Activated T-helper 2 cell treated with anti-CD3 and anti-CD28 coated beads, Interferon-gamma antibody, Interleukin-2, Interleukin-4, amounts not matched to agents 10 μg/mL and 5 μg/mL and 100 μg/mL, durations not matched to agents 14 hours and 24 hours and 36 hours (primary cell): ENCODE measurements at regions of chr15 and their contacts with region 1.

Region 1: GRCh38 chr15:82951472-82952157 is 905 bp downstream of the HOMER2 start:
- DNase-seq: no peak
- H3K4me3 Mint-ChIP-seq: no peak overlapping the region
- H3K27ac Mint-ChIP-seq: no peak overlapping the region
- H3K4me1 Mint-ChIP-seq: peaks cover 13% of the 10 kb centered on the region
- H3K27me3 Mint-ChIP-seq: peaks cover 4% of the 10 kb centered on the region

Region 2: GRCh38 chr15:82832601-82833361 is 118.8 kb before region 1 on chr15:
- intact Hi-C with region 1: loop called (anchors 2 kb)
- DNase-seq: peak; percentile 30
- H3K4me3 Mint-ChIP-seq: peak overlapping the region; percentile 49
- H3K27ac Mint-ChIP-seq: peak overlapping the region; percentile 91
- H3K4me1 Mint-ChIP-seq: peaks cover 46% of the 10 kb centered on the region
- H3K27me3 Mint-ChIP-seq: no peaks in the 10 kb centered on the region

Region 3: DNA sequence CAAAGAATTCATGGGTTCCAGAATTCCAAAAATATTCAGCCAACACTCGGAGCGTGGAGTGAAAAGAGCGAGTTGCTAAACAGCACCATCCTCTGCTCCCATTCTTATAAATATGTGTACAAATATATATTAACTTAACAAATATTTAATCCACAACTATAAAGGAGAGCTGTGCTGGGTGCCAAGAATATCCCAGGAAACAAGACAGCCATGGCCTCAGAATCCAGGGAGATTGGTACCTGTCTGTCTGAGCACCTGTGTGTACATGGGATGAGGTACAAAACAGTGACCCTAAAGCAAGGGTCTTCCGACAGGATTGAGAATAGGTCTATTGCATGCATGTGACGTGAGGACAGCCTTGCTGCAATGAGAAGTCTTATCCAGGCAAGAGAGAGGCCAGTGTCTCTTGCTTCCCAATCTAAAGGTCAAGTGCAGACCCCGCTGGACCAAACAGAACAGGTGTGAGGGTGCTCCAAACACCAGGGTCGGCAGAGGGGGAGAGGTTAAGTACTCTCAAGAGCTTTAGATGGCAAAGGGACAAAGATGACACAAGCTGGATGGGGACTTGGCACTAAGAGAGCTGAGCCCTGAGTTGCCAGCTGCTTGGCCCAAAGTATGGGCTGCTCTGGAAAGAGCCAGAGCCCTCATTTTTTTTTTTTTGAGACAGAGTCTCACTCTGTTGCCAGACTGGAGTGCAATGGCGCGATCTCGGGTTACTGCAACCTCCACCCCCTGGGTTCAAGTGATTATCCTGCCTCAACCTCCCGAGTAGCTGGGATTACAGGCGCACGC is 35.3 kb before region 1 on chr15:
- intact Hi-C with region 1: no loop called
- DNase-seq: no peak
- H3K4me3 Mint-ChIP-seq: no peak overlapping the region
- H3K27ac Mint-ChIP-seq: no peak overlapping the region
- H3K4me1 Mint-ChIP-seq: no peaks in the 10 kb centered on the region
- H3K27me3 Mint-ChIP-seq: no peaks in the 10 kb centered on the region

Region 4: DNA sequence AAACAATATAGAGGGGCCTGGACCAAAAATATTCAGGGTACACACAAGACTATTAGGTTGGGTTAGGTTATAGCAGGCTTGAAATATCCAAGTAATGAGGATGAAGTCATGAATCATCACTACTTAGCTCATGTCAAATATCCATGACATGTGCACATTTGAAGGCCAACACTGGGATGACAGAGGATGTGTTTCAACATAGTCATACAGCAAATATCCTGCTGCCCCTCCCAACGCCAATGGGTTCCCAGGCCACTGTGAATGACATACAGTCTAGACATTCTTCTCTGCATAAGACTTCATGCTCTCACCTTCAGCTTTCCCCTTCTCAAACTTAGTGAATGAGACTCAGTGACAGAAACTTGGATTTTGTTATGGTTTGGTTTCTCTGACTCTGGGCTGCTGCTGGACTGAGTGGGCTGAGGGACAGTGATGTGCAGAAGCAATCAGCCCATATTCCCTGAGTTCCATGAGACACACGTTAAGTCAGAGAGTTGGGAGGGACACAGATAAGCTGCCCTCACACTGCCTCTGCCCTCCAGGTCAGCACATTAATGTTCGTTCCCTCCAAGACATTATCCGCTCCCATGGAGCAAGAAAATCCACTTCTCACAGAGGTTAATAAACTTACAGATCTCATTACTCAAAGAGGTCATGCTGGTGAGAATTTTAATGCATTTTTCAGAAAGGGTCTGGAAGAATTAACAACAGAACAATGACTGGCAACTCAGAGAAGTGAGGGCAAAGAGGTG is 14.5 kb before region 1 on chr15:
- intact Hi-C with region 1: loop called (anchors 2 kb)
- DNase-seq: no peak
- H3K4me3 Mint-ChIP-seq: no peak overlapping the region
- H3K27ac Mint-ChIP-seq: no peak overlapping the region
- H3K4me1 Mint-ChIP-seq: peaks cover 41% of the 10 kb centered on the region
- H3K27me3 Mint-ChIP-seq: peaks cover 2% of the 10 kb centered on the region

Region 5: GRCh38 chr15:82966671-82967071 is 15.1 kb after region 1 on chr15:
- intact Hi-C with region 1: loop called (anchors 1 kb)
- DNase-seq: peak; percentile 20
- H3K4me3 Mint-ChIP-seq: no peak overlapping the region
- H3K27ac Mint-ChIP-seq: no peak overlapping the region
- H3K4me1 Mint-ChIP-seq: peaks cover 30% of the 10 kb centered on the region
- H3K27me3 Mint-ChIP-seq: peaks cover 10% of the 10 kb centered on the region

Region 6: DNA sequence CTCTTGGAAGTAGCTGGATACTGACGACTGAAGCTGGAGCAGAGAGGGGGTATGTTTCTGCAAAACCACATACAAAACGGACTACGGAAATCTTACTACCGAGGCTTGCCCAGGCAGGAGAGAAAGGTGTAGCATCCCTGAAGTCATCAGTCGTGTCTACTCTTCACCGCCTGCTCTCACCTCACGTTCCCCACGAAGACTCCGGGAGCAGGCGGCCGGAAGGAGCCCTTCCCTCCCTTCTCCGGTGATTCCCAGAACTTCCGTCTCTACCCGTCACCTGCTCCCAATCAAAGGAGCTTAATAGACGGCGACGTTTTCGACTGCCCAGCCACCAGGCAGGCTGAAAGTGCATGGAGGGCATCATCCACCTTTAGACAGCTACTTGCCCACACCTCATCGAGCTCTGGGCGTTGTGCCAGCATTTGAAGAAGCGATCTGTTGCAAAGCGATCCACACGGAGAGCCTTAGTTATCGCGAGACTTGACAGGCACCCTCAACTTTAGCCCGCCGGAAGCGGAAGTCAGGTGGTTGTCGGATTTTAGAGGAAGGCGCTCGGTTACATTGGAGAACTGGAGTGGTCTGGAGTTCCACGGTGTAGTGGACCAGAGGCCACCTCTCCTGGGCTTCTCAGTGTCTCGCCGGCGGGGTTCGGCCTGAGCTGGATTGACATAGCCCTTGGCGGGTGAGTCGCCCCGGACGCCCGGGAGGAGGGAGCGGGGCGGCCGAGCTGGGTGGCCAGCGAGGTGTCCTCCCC is 34.2 kb after region 1 on chr15 and contains the start of gene RAMAC:
- intact Hi-C with region 1: loop called (anchors 2 kb)
- DNase-seq: peak; percentile 87
- H3K4me3 Mint-ChIP-seq: peak within 1 kb of the TSS; percentile 86
- H3K27ac Mint-ChIP-seq: peak within 1 kb of the TSS; percentile 95
- H3K4me1 Mint-ChIP-seq: peaks cover 22% of the 10 kb centered on the region
- H3K27me3 Mint-ChIP-seq: no peaks in the 10 kb centered on the region
- total RNA-seq, gene RAMAC: 21.2 and 22.7 TPM in 2 replicates